ENCODE measurements at regions of chr21 and their contacts with region 1.

Region 1: GRCh38 chr21:43789276-43790009 is at the start of gene RRP1:
- DNase-seq: peak; percentile 96
- ATAC-seq: peak; percentile 90
- H3K4me3 Mint-ChIP-seq: peak within 1 kb of the TSS; percentile 95
- H3K27ac Mint-ChIP-seq: peak within 1 kb of the TSS; percentile 92
- H3K4me1 Mint-ChIP-seq: peaks cover 21% of the 10 kb centered on the region
- H3K27me3 Mint-ChIP-seq: no peaks in the 10 kb centered on the region
- total RNA-seq, gene RRP1: 51.7 to 53.4 TPM

Region 2: GRCh38 chr21:43659136-43660000 is 130.1 kb before region 1 on chr21 and contains the starts of genes HSF2BP and RRP1B:
- CTCF ChIA-PET with region 1: no interaction called
- POLR2A ChIA-PET with region 1: no interaction called
- intact Hi-C with region 1: loop called in 1 of 2 experiments (anchors 1 kb)
- DNase-seq: peak; percentile 89
- ATAC-seq: peak; percentile 89
- H3K4me3 Mint-ChIP-seq: peak within 1 kb of the TSS; percentile 94
- H3K27ac Mint-ChIP-seq: peak within 1 kb of the TSS; percentile 93
- H3K4me1 Mint-ChIP-seq: peaks cover 43% of the 10 kb centered on the region
- H3K27me3 Mint-ChIP-seq: no peaks in the 10 kb centered on the region
- total RNA-seq, gene HSF2BP: 1.5 to 1.6 TPM
- total RNA-seq, gene RRP1B: 64.0 to 66.7 TPM

Region 3: GRCh38 chr21:43728467-43729390 is 60.7 kb before region 1 on chr21:
- CTCF ChIA-PET with region 1: interaction called, 5 read pairs
- POLR2A ChIA-PET with region 1: no interaction called
- intact Hi-C with region 1: loop called in 1 of 2 experiments (anchors 1 kb)
- DNase-seq: peak; percentile 90
- ATAC-seq: peak; percentile 87
- H3K4me3 Mint-ChIP-seq: peak overlapping the region; percentile 78
- H3K27ac Mint-ChIP-seq: peak overlapping the region; percentile 92
- H3K4me1 Mint-ChIP-seq: peaks cover 71% of the 10 kb centered on the region
- H3K27me3 Mint-ChIP-seq: no peaks in the 10 kb centered on the region

Region 4: DNA sequence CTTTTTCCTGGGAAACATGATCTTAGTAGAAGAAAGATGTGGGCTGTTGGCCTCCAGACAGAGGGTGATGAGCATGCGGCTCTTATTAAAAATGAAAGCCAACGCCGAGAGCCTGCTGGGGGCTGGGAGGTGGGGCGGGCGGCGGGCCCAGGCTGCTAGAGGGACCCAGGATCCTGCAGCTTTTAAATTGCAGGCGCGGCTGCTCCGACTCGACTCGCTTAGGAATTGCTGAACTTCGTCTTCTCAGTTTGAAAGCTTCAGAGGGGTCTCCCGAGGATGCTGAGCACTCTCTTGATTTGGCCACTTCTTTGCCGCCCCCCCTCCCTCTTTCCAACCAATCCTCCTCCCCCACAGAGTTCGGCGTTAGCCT is 76.8 kb after region 1 on chr21:
- CTCF ChIA-PET with region 1: no interaction called
- POLR2A ChIA-PET with region 1: interaction called, 4 read pairs
- intact Hi-C with region 1: loop called in 1 of 2 experiments (anchors 1 kb)
- DNase-seq: peak; percentile 81
- ATAC-seq: peak; percentile 56
- H3K4me3 Mint-ChIP-seq: peak overlapping the region; percentile 79
- H3K27ac Mint-ChIP-seq: peak overlapping the region; percentile 95
- H3K4me1 Mint-ChIP-seq: peaks cover 44% of the 10 kb centered on the region
- H3K27me3 Mint-ChIP-seq: no peaks in the 10 kb centered on the region

Region 5: GRCh38 chr21:43938751-43939442 is 149.5 kb after region 1 on chr21:
- CTCF ChIA-PET with region 1: interaction called, 3 read pairs
- POLR2A ChIA-PET with region 1: no interaction called
- intact Hi-C with region 1: loop called in 1 of 2 experiments (anchors 1 kb)
- DNase-seq: peak; percentile 95
- ATAC-seq: peak; percentile 98
- H3K4me3 Mint-ChIP-seq: peak overlapping the region; percentile 76
- H3K27ac Mint-ChIP-seq: peak overlapping the region; percentile 86
- H3K4me1 Mint-ChIP-seq: peaks cover 19% of the 10 kb centered on the region
- H3K27me3 Mint-ChIP-seq: no peaks in the 10 kb centered on the region

Region 6: GRCh38 chr21:44299458-44300261 is 510.2 kb after region 1 on chr21 and contains the start of gene PFKL:
- CTCF ChIA-PET with region 1: no interaction called
- POLR2A ChIA-PET with region 1: no interaction called
- intact Hi-C with region 1: loop called in 1 of 2 experiments (anchors 2 kb)
- DNase-seq: peak; percentile 82
- ATAC-seq: peak; percentile 63
- H3K4me3 Mint-ChIP-seq: peak within 1 kb of the TSS; percentile 85
- H3K27ac Mint-ChIP-seq: peak within 1 kb of the TSS; percentile 96
- H3K4me1 Mint-ChIP-seq: peaks cover 51% of the 10 kb centered on the region
- H3K27me3 Mint-ChIP-seq: no peaks in the 10 kb centered on the region
- total RNA-seq, gene PFKL: 167 to 202 TPM

Region 7: DNA sequence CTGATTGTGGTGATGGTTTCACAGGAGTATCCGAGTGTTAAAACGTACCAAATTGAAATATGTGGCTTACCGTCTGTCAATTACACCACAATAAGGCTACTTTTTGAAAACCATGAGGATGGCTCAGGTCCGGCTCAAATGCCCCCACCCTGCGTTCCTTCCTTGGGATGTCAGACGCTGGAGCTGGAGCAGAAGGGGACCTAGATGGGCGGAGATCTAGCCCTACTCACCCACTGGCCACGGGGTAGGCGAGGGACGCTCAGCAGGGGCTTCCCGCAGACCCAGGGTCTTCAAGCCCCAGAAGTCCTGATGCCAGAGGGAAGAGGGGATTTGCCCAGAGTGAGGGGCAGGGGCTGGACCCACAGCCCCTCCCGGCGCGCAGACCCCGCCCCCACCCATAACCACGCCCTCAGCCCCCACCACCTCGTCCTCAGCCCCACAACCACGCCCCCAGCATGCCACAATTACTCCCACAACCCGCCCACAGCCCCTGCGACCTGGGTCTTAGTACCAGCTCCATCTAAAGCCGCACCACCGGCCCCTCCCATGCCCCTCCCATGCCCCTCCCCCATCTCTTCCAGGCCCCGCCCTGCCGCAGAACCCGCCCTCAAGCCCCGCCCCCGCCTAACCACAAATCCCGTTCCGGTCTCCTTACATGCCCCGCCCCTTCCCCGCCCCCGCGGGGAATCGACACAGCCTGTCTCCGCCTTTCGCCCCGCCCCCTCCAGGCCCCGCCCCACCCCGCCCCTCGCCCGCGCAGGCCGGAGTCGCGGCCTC is 665.5 kb after region 1 on chr21 and contains the start of gene LRRC3:
- CTCF ChIA-PET with region 1: no interaction called
- POLR2A ChIA-PET with region 1: no interaction called
- intact Hi-C with region 1: loop called in 1 of 2 experiments (anchors 1 kb)
- DNase-seq: peak; percentile 95
- ATAC-seq: peak; percentile 74
- H3K4me3 Mint-ChIP-seq: peak within 1 kb of the TSS; percentile 67
- H3K27ac Mint-ChIP-seq: no peak within 1 kb of the TSS
- H3K4me1 Mint-ChIP-seq: no peaks in the 10 kb centered on the region
- H3K27me3 Mint-ChIP-seq: peaks cover 15% of the 10 kb centered on the region
- total RNA-seq, gene LRRC3: 2.7 to 2.9 TPM